AG04449 (cell line): ENCODE measurements at regions of chr6 and their contacts with region 1.

Region 1: DNA sequence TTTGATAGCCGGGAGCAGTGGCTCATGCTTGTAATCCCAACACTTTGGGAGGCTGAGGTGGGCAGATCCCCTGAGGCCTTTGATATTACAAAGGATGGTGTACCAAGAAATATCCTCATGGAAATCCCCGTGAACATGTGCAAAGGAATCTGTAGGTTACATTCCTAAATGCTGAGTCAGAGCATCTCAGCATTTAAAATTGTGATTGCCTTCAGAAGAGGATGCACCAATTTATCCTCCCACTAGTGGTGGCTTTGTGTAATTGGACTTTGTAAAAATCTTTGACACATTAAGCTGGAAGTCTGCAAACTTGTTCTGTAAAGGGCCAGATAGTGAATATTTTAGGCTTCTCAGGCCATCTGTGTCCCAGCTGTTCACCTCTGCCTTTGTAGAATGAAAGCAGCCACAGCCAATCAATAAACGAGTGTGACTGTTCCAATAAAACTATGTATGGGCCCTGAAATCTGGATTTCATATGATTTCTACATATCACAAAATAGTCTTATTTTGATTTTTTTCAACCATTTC is 11.8 kb downstream of the TMEM14B start:
- DNase-seq: peak; percentile 84
- H3K4me3 ChIP-seq: no peak overlapping the region
- CTCF ChIP-seq: peak; percentile 52

Region 2: GRCh38 chr6:10268611-10269310 is 490.6 kb before region 1 on chr6:
- CTCF ChIA-PET with region 1: no interaction called
- POLR2A ChIA-PET with region 1: no interaction called
- DNase-seq: no peak
- H3K4me3 ChIP-seq: no peak overlapping the region
- CTCF ChIP-seq: no peak

Region 3: GRCh38 chr6:10747251-10747972 is 12.0 kb before region 1 on chr6 and contains the start of gene TMEM14B:
- CTCF ChIA-PET with region 1: interaction called, 20 read pairs
- POLR2A ChIA-PET with region 1: no interaction called
- DNase-seq: peak; percentile 50
- H3K4me3 ChIP-seq: peak within 1 kb of the TSS; percentile 90
- CTCF ChIP-seq: no peak

Region 4: DNA sequence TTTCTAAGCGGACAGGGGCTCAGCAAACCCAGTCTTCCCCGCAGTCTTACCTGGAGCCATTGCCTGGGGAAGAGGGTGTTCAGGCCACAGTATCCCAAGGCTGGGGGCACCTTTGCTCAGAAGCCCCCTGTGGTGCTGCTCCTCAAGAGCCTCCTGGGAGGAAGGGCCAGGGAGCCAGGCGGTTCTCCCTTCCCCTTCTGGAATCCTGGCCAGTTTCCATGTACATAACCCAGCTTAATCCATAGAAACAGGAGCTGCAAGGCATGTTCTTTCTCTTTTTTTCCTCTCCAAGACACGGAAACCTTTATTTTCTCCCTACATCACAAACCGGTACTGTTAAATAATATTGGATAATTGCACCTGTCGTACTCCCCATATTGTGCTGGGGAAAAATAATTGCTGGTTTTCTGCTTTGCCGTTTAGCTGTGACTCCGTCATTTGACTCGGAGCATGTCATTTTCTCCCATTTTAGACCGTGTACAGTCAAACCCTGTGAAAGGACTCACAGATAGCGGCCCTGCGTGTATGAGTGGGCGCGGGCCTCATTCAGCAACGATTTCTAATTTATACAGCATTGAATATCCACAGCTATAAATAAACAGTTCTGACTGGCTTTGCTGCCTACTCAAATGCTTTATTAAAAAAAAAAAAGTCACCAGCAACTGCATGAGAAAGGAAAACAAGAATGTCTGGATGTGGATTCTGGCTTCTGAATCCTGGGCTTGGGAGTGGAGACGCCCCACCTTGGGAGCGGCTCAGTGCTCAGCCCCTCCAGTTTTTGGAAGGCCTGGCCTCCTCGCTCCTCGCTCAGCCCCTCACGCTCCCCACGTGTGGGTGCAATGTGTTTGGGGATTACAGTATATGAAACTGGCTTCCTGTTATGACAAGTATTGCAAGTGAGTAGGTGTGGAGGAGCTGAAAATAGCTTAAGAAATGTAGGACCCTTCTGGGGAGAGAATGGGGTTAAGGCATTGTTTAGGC is 951.9 kb after region 1 on chr6:
- CTCF ChIA-PET with region 1: no interaction called
- POLR2A ChIA-PET with region 1: no interaction called
- DNase-seq: no peak
- H3K4me3 ChIP-seq: no peak overlapping the region
- CTCF ChIP-seq: no peak